Prostate gland (tissue), 2 donors: ENCODE measurements at regions of chr2 and their contacts with region 1.

Region 1: GRCh38 chr2:2178921-2179320 is 152.2 kb downstream of the MYT1L start:
- DNase-seq: no peak
- H3K4me3 ChIP-seq: no peak overlapping the region
- H3K27ac ChIP-seq: no peak overlapping the region
- H3K4me1 ChIP-seq: no peaks in the 10 kb centered on the region
- H3K27me3 ChIP-seq: peaks cover 3% of the 10 kb centered on the region
- CTCF ChIP-seq: no peak
- POLR2A ChIP-seq: no peak

Region 2: DNA sequence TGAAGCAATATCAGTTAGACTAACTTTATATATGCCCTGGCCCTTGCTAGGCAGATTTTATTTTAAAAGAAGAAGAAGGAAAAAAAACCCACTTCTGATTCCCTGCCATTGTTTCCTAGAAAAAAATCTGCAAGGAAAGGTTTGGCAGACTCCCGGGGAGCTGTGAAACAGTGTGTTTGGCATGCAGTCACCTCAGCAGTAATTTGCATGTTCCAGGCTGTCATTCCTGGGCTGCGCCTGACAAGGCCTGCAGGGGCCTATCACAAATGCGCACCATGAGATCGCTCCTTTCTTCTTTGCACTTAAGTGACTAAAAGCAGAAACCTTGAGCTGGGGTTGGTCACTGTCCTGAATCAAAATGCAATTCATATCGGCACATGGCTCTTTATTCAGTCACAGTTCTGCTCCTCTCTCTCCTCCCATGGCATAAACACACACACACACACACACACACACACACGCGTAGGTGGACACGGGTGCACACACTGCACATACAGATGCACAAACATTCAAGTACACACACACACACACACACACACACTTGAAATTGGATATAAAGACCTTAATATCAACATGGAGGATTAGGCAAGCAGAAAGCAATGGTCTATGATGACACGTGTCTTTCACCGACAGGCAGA is 20.6 kb before region 1 on chr2:
- intact Hi-C with region 1: loop called (anchors 1 kb)
- DNase-seq: no peak
- H3K4me3 ChIP-seq: no peak overlapping the region
- H3K27ac ChIP-seq: no peak overlapping the region
- H3K4me1 ChIP-seq: no peaks in the 10 kb centered on the region
- H3K27me3 ChIP-seq: no peaks in the 10 kb centered on the region
- CTCF ChIP-seq: no peak
- POLR2A ChIP-seq: no peak